ENCODE measurements at regions of chr1 and their contacts with region 1.

Region 1: GRCh38 chr1:1574721-1575537 is at the start of gene SSU72:
- DNase-seq: peak; percentile 90 to 97 (median 93)
- ATAC-seq: peak; percentile 94
- H3K4me3 ChIP-seq: peak within 1 kb of the TSS; percentile 93
- H3K4me3 Mint-ChIP-seq: peak within 1 kb of the TSS; percentile 97 to 99 (median 98)
- H3K27ac ChIP-seq: peak within 1 kb of the TSS; percentile 98
- H3K27ac Mint-ChIP-seq: peak within 1 kb of the TSS; percentile 98 to 100 (median 99)
- H3K4me1 ChIP-seq: peaks cover 22 to 26% of the 10 kb centered on the region in 2 donors
- H3K4me1 Mint-ChIP-seq: peaks cover 21 to 42% (median 31%) of the 10 kb centered on the region in 7 donors
- H3K27me3 ChIP-seq: no peaks in the 10 kb centered on the region
- H3K27me3 Mint-ChIP-seq: peaks cover 0 to 2% (median 0%) of the 10 kb centered on the region in 5 donors
- total RNA-seq, gene SSU72: 121 to 148 (median 137) TPM

Region 2: DNA sequence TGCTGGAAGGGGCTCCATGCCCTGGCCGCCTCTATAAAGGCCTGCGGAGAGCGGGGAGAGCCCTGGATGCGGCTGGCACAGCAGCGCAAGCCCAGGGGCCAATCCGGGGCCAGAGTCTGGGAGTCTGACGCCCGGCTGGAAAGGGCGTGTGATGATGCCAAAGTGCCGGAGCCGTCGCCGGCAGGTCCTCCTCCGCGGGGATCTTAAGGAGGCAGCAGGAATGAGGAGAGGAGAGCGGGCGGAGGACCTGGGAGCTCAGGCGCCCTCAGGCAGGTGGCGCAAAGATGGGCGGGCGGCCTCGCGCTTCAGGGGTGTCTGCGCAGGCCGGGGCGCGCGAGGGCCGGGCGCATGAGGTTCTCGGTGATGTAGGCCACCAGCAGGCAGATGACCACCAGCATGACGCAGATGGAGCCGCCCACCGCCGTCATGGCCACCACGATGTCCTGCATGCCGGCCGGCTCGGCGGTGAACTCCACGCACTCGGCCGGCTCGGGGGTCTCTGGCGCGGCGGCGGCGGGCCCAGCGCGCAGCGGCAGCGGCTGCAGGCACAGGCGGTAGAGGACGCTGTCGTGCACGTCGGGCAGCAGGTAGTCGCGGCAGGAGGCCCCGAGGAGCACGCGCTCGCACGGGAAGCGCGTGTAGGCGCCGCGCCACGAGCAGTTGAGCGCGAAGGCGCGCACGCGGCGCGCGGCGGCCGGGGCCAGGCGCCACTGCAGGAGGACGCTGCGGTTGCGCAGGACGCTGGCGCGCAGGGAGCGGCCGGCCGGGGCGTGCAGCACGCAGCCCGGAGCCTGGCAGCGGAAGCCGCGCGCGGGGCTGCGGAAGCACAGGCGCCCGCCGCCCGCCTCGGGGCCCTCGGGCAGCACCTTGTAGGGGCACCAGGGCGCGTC is 24.3 kb after region 1 on chr1:
- CTCF ChIA-PET with region 1: no interaction called
- POLR2A ChIA-PET with region 1: interaction called, 3 read pairs
- intact Hi-C with region 1: loop called in 1 of 2 experiments (anchors 1 kb)
- DNase-seq: peak in 8 of 9 donors; percentile 20 to 56 (median 50)
- ATAC-seq: peak; percentile 58
- H3K4me3 ChIP-seq: no peak overlapping the region
- H3K4me3 Mint-ChIP-seq: peak overlapping the region; percentile 60 to 90 (median 76)
- H3K27ac ChIP-seq: no peak overlapping the region
- H3K27ac Mint-ChIP-seq: peak overlapping the region in 3 of 9 donors; percentile 56 to 80 (median 62)
- H3K4me1 ChIP-seq: no peaks in the 10 kb centered on the region
- H3K4me1 Mint-ChIP-seq: peaks cover 0 to 13% (median 5%) of the 10 kb centered on the region in 7 donors
- H3K27me3 ChIP-seq: peaks cover 0 to 4% of the 10 kb centered on the region in 2 donors
- H3K27me3 Mint-ChIP-seq: peaks cover 0 to 10% (median 0%) of the 10 kb centered on the region in 5 donors

Region 3: DNA sequence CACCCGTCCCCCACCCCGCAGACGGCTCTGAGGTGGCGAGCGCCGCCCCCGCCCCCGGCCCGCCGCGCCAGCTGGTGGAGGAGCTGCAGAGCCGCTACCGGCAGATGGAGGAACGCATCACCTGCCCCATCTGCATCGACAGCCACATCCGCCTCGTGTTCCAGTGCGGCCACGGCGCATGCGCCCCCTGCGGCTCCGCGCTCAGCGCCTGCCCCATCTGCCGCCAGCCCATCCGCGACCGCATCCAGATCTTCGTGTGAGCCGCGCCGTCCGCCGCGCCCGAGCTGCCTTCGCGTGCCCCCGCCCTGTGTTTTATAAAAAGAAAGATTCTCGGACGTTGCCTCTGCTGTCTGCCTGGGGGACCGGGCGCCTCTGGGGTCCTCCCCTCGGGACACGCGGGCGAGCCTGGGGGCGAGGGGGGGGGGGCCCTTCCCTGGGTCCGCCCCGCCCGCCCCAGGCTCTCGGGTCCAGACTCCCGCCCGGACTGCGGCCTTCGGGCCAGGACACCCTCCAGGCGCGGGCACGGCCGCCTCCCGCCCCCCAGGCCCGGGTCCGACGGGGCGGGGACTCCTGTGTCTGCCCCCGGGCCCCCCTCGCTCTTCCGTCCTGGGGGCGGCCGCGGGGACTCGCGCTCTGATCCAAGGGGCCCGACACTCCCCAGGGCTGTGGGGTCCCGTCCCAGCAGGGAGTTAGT is 55.5 kb after region 1 on chr1:
- CTCF ChIA-PET with region 1: no interaction called
- POLR2A ChIA-PET with region 1: interaction called, 6 read pairs
- intact Hi-C with region 1: loop called in 1 of 2 experiments (anchors 2 kb)
- DNase-seq: peak; percentile 90 to 97 (median 96)
- ATAC-seq: peak; percentile 76
- H3K4me3 ChIP-seq: peak overlapping the region; percentile 17
- H3K4me3 Mint-ChIP-seq: peak overlapping the region; percentile 85 to 95 (median 90)
- H3K27ac ChIP-seq: peak overlapping the region; percentile 68
- H3K27ac Mint-ChIP-seq: peak overlapping the region; percentile 83 to 98 (median 95)
- H3K4me1 ChIP-seq: peaks cover 0 to 4% of the 10 kb centered on the region in 2 donors
- H3K4me1 Mint-ChIP-seq: peaks cover 0 to 11% (median 4%) of the 10 kb centered on the region in 7 donors
- H3K27me3 ChIP-seq: no peaks in the 10 kb centered on the region
- H3K27me3 Mint-ChIP-seq: peaks cover 0 to 5% (median 0%) of the 10 kb centered on the region in 5 donors

Region 4: GRCh38 chr1:1687846-1688245 is 112.9 kb after region 1 on chr1:
- CTCF ChIA-PET with region 1: no interaction called
- POLR2A ChIA-PET with region 1: no interaction called
- intact Hi-C with region 1: loop called in 1 of 2 experiments (anchors 2 kb)
- DNase-seq: no peak
- ATAC-seq: no peak
- H3K4me3 ChIP-seq: no peak overlapping the region
- H3K4me3 Mint-ChIP-seq: peak overlapping the region in 5 of 10 donors; percentile 11 to 77 (median 39)
- H3K27ac ChIP-seq: peak overlapping the region; percentile 20
- H3K27ac Mint-ChIP-seq: peak overlapping the region in 4 of 9 donors; percentile 3 to 84 (median 62)
- H3K4me1 ChIP-seq: no peaks in the 10 kb centered on the region
- H3K4me1 Mint-ChIP-seq: peaks cover 2 to 64% (median 37%) of the 10 kb centered on the region in 7 donors
- H3K27me3 ChIP-seq: no peaks in the 10 kb centered on the region
- H3K27me3 Mint-ChIP-seq: no peaks in the 10 kb centered on the region